ENCODE measurements at regions of chr3 and their contacts with region 1.

Region 1: DNA sequence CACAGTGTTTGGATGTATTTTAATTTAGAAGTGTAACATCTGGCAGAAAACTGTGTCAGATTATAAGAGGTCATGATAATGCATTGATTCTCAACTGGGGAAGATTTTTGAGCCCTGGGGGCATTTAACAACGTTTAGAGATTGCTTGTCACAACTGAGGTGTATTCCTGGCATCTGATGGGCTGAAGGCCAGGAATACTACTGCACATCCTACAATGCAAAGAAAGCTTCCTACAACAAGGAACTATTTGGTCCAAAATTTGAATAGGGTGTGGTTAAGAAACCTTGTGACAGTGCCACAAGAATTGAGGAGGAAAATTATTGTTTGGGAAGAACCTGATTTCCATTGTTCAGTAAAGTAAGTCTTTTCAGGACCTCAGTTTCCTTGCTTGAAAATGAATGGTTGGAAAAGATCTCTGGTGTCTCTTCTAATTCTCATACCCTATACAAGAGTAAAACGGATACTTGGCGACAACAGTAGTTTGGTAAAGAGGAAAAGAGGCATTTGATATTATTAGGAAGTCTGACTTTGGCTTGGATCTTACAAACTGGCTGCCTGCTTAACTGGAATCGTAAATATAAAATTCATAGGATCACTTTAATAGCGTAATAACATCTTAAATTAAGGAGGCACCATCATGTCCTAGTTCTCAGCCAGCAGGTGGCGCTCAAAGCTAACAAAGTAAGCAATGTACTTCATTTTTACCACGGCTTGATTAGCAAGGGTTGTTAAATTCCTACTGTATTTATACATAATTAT is 4.3 kb downstream of the DAZL start:
- DNase-seq: peak; percentile 87
- ATAC-seq: peak; percentile 62 to 68

Region 2: DNA sequence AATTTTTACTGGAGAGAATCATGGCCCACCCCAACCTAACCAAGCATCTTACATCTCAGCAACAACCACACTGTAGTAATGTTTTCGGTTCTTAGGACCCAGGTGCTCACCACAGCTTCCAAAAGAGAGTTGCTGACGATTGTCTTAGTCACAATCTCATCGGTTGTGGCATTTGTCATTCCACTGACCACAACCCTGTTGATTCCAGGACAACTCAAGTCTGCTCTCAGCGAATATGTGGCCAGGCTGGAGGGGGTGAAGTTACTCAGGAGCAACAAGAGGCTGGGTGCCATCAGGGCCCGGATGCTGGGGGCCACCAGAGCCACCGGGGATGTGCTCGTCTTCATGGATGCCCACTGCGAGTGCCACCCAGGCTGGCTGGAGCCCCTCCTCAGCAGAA is 400.5 kb before region 1 on chr3:
- intact Hi-C with region 1: no loop called
- DNase-seq: no peak
- ATAC-seq: no peak

Region 3: DNA sequence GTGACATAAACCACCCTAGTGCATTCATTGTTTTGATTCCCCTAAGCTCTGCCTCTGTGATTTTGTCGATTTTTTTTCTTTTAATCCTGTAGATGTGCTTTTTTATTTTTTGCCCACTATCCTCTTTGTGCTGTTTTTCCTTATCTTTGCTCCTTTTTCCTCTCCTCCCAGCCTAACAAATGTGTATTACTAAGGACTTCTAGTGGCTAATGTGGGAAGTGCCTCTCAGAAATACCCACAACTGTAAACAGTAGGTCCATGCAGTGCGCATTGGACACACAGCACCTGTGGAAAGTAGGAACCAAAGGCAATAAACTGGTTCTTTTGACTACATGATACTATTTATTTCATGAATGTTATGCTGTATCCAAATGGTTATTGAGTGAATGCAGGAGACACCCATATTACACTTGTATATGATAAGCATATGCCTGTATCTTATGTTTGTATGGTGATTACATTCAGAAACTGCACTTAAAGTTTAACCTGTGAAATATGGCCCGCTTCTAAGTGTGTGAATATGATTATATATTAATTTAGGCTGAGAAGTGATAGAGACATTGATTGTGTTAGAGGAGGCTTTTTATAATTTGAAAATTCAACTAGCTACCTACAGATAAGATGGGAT is 431.6 kb after region 1 on chr3:
- intact Hi-C with region 1: loop called (anchors 10 kb)
- DNase-seq: no peak
- ATAC-seq: peak; percentile 64 to 79

Region 4: GRCh38 chr3:17233398-17233800 is 632.4 kb after region 1 on chr3:
- intact Hi-C with region 1: loop called (anchors 2 to 10 kb)
- DNase-seq: no peak
- ATAC-seq: peak; percentile 79 to 87

Region 5: DNA sequence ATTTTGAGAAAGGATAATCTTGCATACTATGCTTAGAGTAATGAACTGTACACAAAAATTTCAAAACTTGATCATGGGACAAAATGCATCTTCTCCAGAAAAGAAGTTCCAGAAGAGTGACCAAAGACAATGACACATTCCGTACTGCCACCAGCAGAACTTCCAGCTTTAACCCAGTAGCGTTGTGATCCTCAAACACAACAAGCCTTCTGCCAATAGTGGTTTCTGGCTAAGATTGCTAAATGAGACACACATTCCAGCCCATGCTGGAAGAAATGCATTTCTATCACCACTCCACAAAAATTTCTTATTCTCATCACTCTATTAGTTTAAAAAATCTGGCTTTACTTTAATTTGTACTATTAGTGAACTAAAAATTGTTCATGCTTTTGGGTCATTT is 806.6 kb after region 1 on chr3:
- intact Hi-C with region 1: loop called in 1 of 2 experiments (anchors 5 kb)
- DNase-seq: no peak
- ATAC-seq: no peak

Measured in left cardiac atrium (tissue), 4 donors.